ENCODE measurements at regions of chr22 and their contacts with region 1.

Region 1: GRCh38 chr22:31977141-31977841 is 33.0 kb downstream of the YWHAH start:
- DNase-seq: peak; percentile 85
- ATAC-seq: peak; percentile 91

Region 2: DNA sequence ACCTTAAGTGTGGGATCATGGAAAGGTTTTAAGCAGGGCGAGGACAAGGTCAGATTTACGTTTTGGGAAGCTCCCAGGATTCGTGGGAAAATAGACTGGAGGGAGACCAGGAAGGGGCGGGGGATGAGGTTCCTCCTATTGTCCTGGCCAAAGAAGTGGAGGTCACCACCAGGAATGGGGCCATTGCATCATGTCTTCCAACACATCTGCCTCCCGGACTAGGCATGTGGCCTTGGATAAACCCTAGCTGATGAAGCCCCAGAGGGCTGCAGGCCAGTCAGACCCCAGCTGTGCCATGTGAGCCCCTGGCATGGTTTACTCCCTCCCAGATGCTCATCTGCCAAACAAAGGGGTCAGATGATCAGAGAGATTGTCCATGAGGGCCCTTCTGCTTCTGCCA is 44.4 kb before region 1 on chr22:
- intact Hi-C with region 1: no loop called
- DNase-seq: no peak
- ATAC-seq: peak; percentile 27

Region 3: DNA sequence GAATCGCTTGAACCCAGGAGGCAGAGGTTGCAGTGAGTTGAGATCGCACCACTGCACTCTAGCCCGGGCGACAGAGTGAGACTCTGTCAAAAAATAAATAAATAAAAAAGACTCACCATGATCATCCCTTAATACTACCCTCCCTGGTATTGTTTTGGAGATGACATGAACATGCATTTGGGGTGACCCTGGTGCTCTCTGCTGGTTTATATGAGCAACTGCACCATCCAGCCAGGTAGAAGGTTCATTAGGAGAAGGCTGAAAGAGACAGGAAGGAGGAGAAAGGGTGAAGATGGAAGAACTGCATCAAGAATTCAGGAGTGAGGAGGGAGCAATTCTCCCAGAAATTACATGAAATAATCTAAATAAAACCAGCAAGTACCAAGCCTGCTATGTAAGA is 103.6 kb after region 1 on chr22:
- intact Hi-C with region 1: loop called (anchors 5 kb)
- DNase-seq: no peak
- ATAC-seq: peak; percentile 38

Measured in Right ventricle myocardium superior (tissue), 1 donor.